Naive thymus-derived CD4-positive, alpha-beta T cell (primary cell): ENCODE measurements at regions of chr22 and their contacts with region 1.

Region 1: GRCh38 chr22:45240810-45241631 is at the start of gene KIAA0930:
- DNase-seq: peak; percentile 62 to 84 (median 74)
- ATAC-seq: peak; percentile 90
- H3K4me3 ChIP-seq: peak within 1 kb of the TSS; percentile 60
- H3K4me3 Mint-ChIP-seq: peak within 1 kb of the TSS; percentile 85 to 99 (median 94)
- H3K27ac ChIP-seq: peak within 1 kb of the TSS; percentile 66
- H3K27ac Mint-ChIP-seq: peak within 1 kb of the TSS; percentile 72 to 93 (median 87)
- H3K4me1 ChIP-seq: peaks cover 11 to 17% of the 10 kb centered on the region in 2 donors
- H3K4me1 Mint-ChIP-seq: peaks cover 18 to 40% (median 32%) of the 10 kb centered on the region in 7 donors
- H3K27me3 ChIP-seq: no peaks in the 10 kb centered on the region
- H3K27me3 Mint-ChIP-seq: peaks cover 0 to 2% (median 0%) of the 10 kb centered on the region in 5 donors
- total RNA-seq, gene KIAA0930: 13.2 to 58.2 (median 27.9) TPM

Region 2: GRCh38 chr22:44497218-44497904 is 743.7 kb before region 1 on chr22:
- CTCF ChIA-PET with region 1: no interaction called
- POLR2A ChIA-PET with region 1: no interaction called
- intact Hi-C with region 1: loop called in 1 of 2 experiments (anchors 5 kb)
- DNase-seq: peak in 2 of 9 donors; percentile 8 to 11
- ATAC-seq: no peak
- H3K4me3 ChIP-seq: peak overlapping the region; percentile 61
- H3K4me3 Mint-ChIP-seq: peak overlapping the region; percentile 42 to 89 (median 72)
- H3K27ac ChIP-seq: peak overlapping the region; percentile 80
- H3K27ac Mint-ChIP-seq: peak overlapping the region; percentile 15 to 91 (median 73)
- H3K4me1 ChIP-seq: peaks cover 4 to 28% of the 10 kb centered on the region in 2 donors
- H3K4me1 Mint-ChIP-seq: peaks cover 5 to 47% (median 29%) of the 10 kb centered on the region in 7 donors
- H3K27me3 ChIP-seq: no peaks in the 10 kb centered on the region
- H3K27me3 Mint-ChIP-seq: peaks cover 0 to 9% (median 5%) of the 10 kb centered on the region in 5 donors

Region 3: DNA sequence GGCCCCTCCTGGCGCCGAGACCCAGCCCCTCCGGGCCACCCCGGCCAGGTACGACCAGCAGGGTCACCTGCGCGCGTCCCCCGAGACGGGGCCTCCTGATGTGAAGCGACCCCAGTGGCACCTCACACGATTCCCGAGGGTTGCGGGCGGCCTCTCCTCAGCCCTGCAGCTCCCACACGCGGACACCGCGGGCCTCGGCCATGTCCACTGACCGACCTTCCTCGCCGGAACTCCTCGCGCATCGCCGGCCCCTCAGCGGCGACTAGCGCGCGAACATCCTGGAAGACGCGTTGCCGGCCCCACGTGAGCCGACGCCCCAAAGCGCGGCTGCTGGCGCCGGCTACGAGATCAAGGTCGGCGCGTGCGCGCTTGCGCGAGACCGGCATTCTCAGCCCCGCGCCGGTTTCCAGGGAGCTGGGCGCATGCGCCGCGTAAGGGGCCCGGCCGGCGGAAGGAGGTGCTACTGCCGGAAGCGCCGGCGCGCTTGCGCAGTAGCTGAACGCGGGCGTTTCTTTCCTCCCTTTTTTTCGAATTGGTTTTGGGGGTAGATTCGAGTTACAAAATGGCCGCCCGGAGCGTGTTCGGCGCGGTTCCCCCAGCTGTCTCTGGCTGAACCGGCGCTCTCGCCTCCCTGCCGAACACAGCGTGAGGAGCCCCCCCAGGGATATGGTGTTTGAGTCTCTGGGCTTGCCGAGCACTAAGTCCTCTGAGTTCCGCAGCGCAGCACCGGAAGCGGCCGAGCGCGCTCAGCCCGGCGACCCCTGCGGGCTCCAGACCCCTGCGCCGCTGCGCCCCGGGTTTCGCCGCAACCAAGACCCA is 77.4 kb before region 1 on chr22 and contains the start of gene NUP50:
- CTCF ChIA-PET with region 1: no interaction called
- POLR2A ChIA-PET with region 1: interaction called, 6 read pairs
- intact Hi-C with region 1: loop called (anchors 1 to 5 kb)
- DNase-seq: peak; percentile 93 to 98 (median 97)
- ATAC-seq: peak; percentile 89
- H3K4me3 ChIP-seq: peak within 1 kb of the TSS; percentile 81
- H3K4me3 Mint-ChIP-seq: peak within 1 kb of the TSS; percentile 85 to 100 (median 96)
- H3K27ac ChIP-seq: peak within 1 kb of the TSS; percentile 77
- H3K27ac Mint-ChIP-seq: peak within 1 kb of the TSS; percentile 88 to 97 (median 96)
- H3K4me1 ChIP-seq: peaks cover 26 to 30% of the 10 kb centered on the region in 2 donors
- H3K4me1 Mint-ChIP-seq: peaks cover 37 to 72% (median 63%) of the 10 kb centered on the region in 7 donors
- H3K27me3 ChIP-seq: no peaks in the 10 kb centered on the region
- H3K27me3 Mint-ChIP-seq: no peaks in the 10 kb centered on the region
- total RNA-seq, gene NUP50: 107 to 151 (median 130) TPM

Region 4: GRCh38 chr22:45268958-45269844 is 28.2 kb after region 1 on chr22:
- CTCF ChIA-PET with region 1: no interaction called
- POLR2A ChIA-PET with region 1: no interaction called
- intact Hi-C with region 1: loop called (anchors 1 kb)
- DNase-seq: peak; percentile 82 to 99 (median 90)
- ATAC-seq: peak; percentile 100
- H3K4me3 ChIP-seq: peak overlapping the region; percentile 85
- H3K4me3 Mint-ChIP-seq: peak overlapping the region; percentile 71 to 86 (median 84)
- H3K27ac ChIP-seq: peak overlapping the region; percentile 28
- H3K27ac Mint-ChIP-seq: peak overlapping the region; percentile 43 to 85 (median 72)
- H3K4me1 ChIP-seq: peaks cover 4% of the 10 kb centered on the region in 2 donors
- H3K4me1 Mint-ChIP-seq: peaks cover 4 to 11% (median 8%) of the 10 kb centered on the region in 7 donors
- H3K27me3 ChIP-seq: no peaks in the 10 kb centered on the region
- H3K27me3 Mint-ChIP-seq: peaks cover 0 to 55% (median 0%) of the 10 kb centered on the region in 5 donors

Region 5: GRCh38 chr22:45435544-45436139 is 194.6 kb after region 1 on chr22:
- CTCF ChIA-PET with region 1: no interaction called
- POLR2A ChIA-PET with region 1: no interaction called
- intact Hi-C with region 1: loop called in 1 of 2 experiments (anchors 1 kb)
- DNase-seq: peak; percentile 60 to 79 (median 73)
- ATAC-seq: peak; percentile 93
- H3K4me3 ChIP-seq: no peak overlapping the region
- H3K4me3 Mint-ChIP-seq: peak overlapping the region in 5 of 10 donors; percentile 12 to 65 (median 32)
- H3K27ac ChIP-seq: no peak overlapping the region
- H3K27ac Mint-ChIP-seq: peak overlapping the region in 6 of 9 donors; percentile 31 to 71 (median 60)
- H3K4me1 ChIP-seq: peaks cover 2 to 6% of the 10 kb centered on the region in 2 donors
- H3K4me1 Mint-ChIP-seq: peaks cover 9 to 22% (median 13%) of the 10 kb centered on the region in 7 donors
- H3K27me3 ChIP-seq: no peaks in the 10 kb centered on the region
- H3K27me3 Mint-ChIP-seq: peaks cover 0 to 7% (median 0%) of the 10 kb centered on the region in 5 donors

Region 6: GRCh38 chr22:45516923-45517675 is 276.1 kb after region 1 on chr22:
- CTCF ChIA-PET with region 1: no interaction called
- POLR2A ChIA-PET with region 1: no interaction called
- intact Hi-C with region 1: no loop called
- DNase-seq: no peak
- ATAC-seq: no peak
- H3K4me3 ChIP-seq: no peak overlapping the region
- H3K4me3 Mint-ChIP-seq: no peak overlapping the region
- H3K27ac ChIP-seq: no peak overlapping the region
- H3K27ac Mint-ChIP-seq: no peak overlapping the region
- H3K4me1 ChIP-seq: no peaks in the 10 kb centered on the region
- H3K4me1 Mint-ChIP-seq: no peaks in the 10 kb centered on the region
- H3K27me3 ChIP-seq: no peaks in the 10 kb centered on the region
- H3K27me3 Mint-ChIP-seq: peaks cover 0 to 8% (median 0%) of the 10 kb centered on the region in 5 donors